CD4-positive, alpha-beta T cell (primary cell): ENCODE measurements at regions of chr9 and their contacts with region 1.

Region 1: DNA sequence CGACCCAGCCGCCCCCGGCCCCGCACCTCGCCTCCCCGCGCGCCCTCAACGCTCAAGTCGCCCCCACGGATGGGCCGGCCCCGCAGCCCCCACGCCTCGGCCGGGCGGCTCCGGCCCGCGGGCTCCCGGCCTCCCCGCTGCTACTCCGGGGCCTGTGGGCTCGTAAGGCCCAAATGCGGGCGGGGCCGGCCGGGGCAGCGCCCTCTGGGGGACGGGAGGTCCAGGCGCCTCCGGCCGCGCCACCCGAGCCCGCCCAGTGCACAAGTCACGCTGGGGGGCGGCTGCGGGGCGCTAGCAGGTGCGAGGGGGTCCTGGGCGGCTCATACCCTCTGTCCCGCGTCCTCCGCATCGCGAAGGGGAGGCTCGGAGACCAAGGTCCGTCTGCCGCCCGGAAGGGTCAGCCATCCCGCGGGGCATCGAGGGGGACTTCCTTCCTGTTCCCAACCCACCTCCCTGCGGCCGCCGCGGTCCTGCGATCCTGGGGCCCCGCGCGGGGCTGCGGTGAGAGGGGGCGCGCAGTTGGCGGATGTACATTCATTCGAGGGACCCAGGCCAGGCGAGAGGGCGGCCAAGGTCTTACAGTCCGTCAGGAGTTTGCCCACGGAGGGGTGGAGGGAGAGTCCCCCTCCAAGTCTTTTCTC is at the start of gene CIZ1:
- DNase-seq: peak; percentile 43 to 88 (median 70)
- ATAC-seq: peak; percentile 82
- H3K4me3 ChIP-seq: peak within 1 kb of the TSS; percentile 75
- H3K4me3 Mint-ChIP-seq: peak within 1 kb of the TSS; percentile 93
- H3K27ac ChIP-seq: no peak within 1 kb of the TSS
- H3K27ac Mint-ChIP-seq: peak within 1 kb of the TSS; percentile 89
- H3K4me1 ChIP-seq: peaks cover 24% of the 10 kb centered on the region
- H3K4me1 Mint-ChIP-seq: peaks cover 31% of the 10 kb centered on the region
- H3K27me3 ChIP-seq: peaks cover 0 to 4% of the 10 kb centered on the region in 2 experiments
- H3K27me3 Mint-ChIP-seq: no peaks in the 10 kb centered on the region
- CTCF ChIP-seq: peak; percentile 55
- total RNA-seq, gene CIZ1: 106 to 107 TPM

Region 2: DNA sequence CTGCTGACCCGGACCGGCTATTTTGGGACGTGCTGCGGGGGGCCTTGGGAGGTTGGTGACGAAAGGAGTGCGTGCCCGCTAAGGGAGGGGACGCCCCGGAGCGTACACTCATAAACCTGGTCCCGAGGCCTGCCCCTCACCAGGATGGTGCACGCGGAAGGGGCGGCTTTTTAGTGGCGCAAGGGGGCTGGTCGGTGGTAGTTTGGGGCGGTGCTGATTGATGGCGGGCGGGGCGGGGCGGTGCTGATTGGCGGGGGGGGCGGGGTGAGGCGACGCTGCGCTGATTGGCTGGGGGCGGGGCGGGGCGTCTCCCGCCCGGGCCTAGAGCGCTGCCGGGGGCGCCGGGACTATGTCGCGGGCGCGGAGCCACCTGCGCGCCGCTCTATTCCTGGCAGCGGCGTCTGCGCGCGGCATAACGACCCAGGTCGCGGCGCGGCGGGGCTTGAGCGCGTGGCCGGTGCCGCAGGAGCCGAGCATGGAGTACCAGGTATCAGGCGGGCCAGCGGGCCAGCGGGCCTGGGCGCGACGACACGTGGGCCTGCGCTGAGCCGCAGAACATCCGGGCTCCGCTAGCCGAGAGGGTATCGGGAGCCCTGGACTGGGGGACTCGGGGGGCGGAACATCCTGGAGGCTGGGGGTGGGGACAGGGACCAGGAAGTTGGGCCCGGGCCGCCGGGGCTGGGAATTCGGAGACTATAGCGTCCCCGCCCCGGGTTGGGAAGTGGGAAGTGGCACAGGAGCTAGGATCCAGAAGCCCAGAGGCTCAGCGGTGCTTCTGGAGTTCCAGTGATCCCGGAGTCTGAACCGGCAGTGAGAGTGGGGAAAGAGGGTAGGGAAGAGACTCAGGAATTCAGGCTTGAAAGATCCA is 388.7 kb before region 1 on chr9 and contains the start of gene FPGS:
- CTCF ChIA-PET with region 1: no interaction called
- POLR2A ChIA-PET with region 1: no interaction called
- intact Hi-C with region 1: loop called in 1 of 2 experiments (anchors 5 kb)
- DNase-seq: peak; percentile 63 to 94 (median 79)
- ATAC-seq: peak; percentile 90
- H3K4me3 ChIP-seq: peak within 1 kb of the TSS; percentile 79
- H3K4me3 Mint-ChIP-seq: peak within 1 kb of the TSS; percentile 91
- H3K27ac ChIP-seq: peak within 1 kb of the TSS; percentile 79
- H3K27ac Mint-ChIP-seq: peak within 1 kb of the TSS; percentile 80
- H3K4me1 ChIP-seq: peaks cover 29% of the 10 kb centered on the region
- H3K4me1 Mint-ChIP-seq: peaks cover 20% of the 10 kb centered on the region
- H3K27me3 ChIP-seq: no peaks in the 10 kb centered on the region
- H3K27me3 Mint-ChIP-seq: no peaks in the 10 kb centered on the region
- CTCF ChIP-seq: no peak
- total RNA-seq, gene FPGS: 58.0 to 66.6 TPM

Region 3: GRCh38 chr9:128127990-128128835 is 63.3 kb before region 1 on chr9:
- CTCF ChIA-PET with region 1: no interaction called
- POLR2A ChIA-PET with region 1: interaction called, 3 read pairs
- intact Hi-C with region 1: loop called in 1 of 2 experiments (anchors 1 kb)
- DNase-seq: peak; percentile 69 to 94 (median 84)
- ATAC-seq: peak; percentile 79
- H3K4me3 ChIP-seq: peak overlapping the region; percentile 99
- H3K4me3 Mint-ChIP-seq: peak overlapping the region; percentile 100
- H3K27ac ChIP-seq: peak overlapping the region; percentile 94 to 97
- H3K27ac Mint-ChIP-seq: peak overlapping the region; percentile 100
- H3K4me1 ChIP-seq: peaks cover 44% of the 10 kb centered on the region
- H3K4me1 Mint-ChIP-seq: peaks cover 42% of the 10 kb centered on the region
- H3K27me3 ChIP-seq: no peaks in the 10 kb centered on the region
- H3K27me3 Mint-ChIP-seq: peaks cover 3% of the 10 kb centered on the region
- CTCF ChIP-seq: no peak

Region 4: DNA sequence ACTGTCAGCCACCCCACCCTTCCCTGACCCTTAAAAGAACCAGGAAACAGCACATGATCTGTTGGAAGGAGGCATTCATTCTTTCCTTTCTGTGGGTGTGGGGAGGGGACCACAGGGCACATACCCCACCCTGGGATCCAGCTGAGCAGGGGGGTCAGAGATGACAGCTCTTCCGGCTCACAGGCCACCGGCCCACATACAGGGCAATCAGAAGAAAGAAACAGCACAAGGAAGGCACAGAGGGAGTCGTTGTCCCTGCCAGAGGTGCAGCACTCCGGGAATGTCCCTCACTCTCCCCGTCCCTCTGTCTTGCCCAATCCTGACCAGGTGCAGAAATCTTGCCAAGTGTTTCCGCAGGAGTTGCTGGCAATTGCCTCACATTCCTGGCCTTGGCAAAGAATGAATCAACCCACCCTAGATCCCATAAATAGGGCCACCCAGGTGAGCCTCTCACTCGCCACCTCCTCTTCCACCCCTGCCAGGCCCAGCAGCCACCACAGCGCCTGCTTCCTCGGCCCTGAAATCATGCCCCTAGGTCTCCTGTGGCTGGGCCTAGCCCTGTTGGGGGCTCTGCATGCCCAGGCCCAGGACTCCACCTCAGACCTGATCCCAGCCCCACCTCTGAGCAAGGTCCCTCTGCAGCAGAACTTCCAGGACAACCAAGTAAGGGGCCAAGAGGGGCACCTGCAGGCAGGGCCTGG is 42.4 kb before region 1 on chr9 and contains the start of gene LCN2:
- CTCF ChIA-PET with region 1: no interaction called
- POLR2A ChIA-PET with region 1: no interaction called
- intact Hi-C with region 1: no loop called
- DNase-seq: no peak
- ATAC-seq: no peak
- H3K4me3 ChIP-seq: no peak within 1 kb of the TSS
- H3K4me3 Mint-ChIP-seq: no peak within 1 kb of the TSS
- H3K27ac ChIP-seq: no peak within 1 kb of the TSS
- H3K27ac Mint-ChIP-seq: no peak within 1 kb of the TSS
- H3K4me1 ChIP-seq: no peaks in the 10 kb centered on the region
- H3K4me1 Mint-ChIP-seq: no peaks in the 10 kb centered on the region
- H3K27me3 ChIP-seq: no peaks in the 10 kb centered on the region
- H3K27me3 Mint-ChIP-seq: no peaks in the 10 kb centered on the region
- CTCF ChIP-seq: no peak
- total RNA-seq, gene LCN2: not detected

Region 5: DNA sequence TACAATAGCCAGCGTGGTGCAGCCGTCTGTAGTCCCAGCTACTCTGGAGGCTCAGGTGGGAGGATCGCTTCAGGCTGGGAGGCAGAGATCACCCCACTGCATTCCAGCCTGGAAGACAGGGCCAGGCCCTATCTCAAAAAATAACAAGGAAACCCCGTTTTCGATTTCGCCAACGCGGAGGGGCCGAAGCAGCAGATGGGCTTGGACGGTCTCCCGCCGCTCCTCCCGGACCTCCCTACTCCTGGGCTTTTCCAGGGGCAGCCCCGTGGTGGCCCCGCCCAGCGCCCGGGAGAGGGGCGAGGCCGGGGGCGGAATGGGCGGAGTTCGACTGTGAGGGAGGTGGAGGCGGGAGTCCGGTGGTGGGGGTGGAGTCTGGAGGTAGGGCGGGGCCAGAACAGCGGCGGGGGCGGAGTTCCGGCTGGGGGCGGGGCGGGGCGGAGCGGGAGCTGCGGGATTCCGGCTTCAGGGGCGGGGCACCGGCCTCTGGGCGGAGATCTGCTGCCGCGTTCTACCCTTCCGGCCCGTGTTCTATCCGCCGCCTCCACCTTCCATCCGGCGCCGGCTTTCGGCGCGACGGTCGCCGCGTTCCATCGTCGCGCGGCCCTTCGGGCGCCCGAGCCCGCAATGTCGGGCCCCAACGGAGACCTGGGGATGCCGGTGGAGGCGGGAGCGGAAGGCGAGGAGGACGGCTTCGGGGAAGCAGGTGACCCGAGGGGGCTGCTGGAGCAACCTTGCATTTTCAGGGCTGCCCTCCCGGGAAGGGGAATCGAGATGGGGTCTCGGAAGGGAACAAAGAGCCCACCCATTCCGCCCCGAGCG is 31.5 kb before region 1 on chr9 and contains the start of gene BBLN:
- CTCF ChIA-PET with region 1: interaction called, 8 read pairs
- POLR2A ChIA-PET with region 1: interaction called, 13 read pairs
- intact Hi-C with region 1: loop called in 1 of 2 experiments (anchors 1 kb)
- DNase-seq: peak; percentile 86 to 97 (median 92)
- ATAC-seq: peak; percentile 78
- H3K4me3 ChIP-seq: peak within 1 kb of the TSS; percentile 97
- H3K4me3 Mint-ChIP-seq: peak within 1 kb of the TSS; percentile 89
- H3K27ac ChIP-seq: peak within 1 kb of the TSS; percentile 77 to 86
- H3K27ac Mint-ChIP-seq: peak within 1 kb of the TSS; percentile 92
- H3K4me1 ChIP-seq: peaks cover 24% of the 10 kb centered on the region
- H3K4me1 Mint-ChIP-seq: peaks cover 20% of the 10 kb centered on the region
- H3K27me3 ChIP-seq: no peaks in the 10 kb centered on the region
- H3K27me3 Mint-ChIP-seq: no peaks in the 10 kb centered on the region
- CTCF ChIP-seq: no peak
- total RNA-seq, gene BBLN: 53.6 to 55.9 TPM

Region 6: GRCh38 chr9:128203024-128203706 is 11.6 kb after region 1 on chr9 and contains the start of gene DNM1:
- CTCF ChIA-PET with region 1: interaction called, 4 read pairs
- POLR2A ChIA-PET with region 1: interaction called, 3 read pairs
- intact Hi-C with region 1: loop called (anchors 1 kb)
- DNase-seq: peak; percentile 41 to 91 (median 65)
- ATAC-seq: peak; percentile 98
- H3K4me3 ChIP-seq: peak within 1 kb of the TSS; percentile 55
- H3K4me3 Mint-ChIP-seq: peak within 1 kb of the TSS; percentile 83
- H3K27ac ChIP-seq: no peak within 1 kb of the TSS
- H3K27ac Mint-ChIP-seq: no peak within 1 kb of the TSS
- H3K4me1 ChIP-seq: peaks cover 17% of the 10 kb centered on the region
- H3K4me1 Mint-ChIP-seq: peaks cover 5% of the 10 kb centered on the region
- H3K27me3 ChIP-seq: peaks cover 11 to 17% of the 10 kb centered on the region in 2 experiments
- H3K27me3 Mint-ChIP-seq: peaks cover 9% of the 10 kb centered on the region
- CTCF ChIP-seq: peak; percentile 72
- total RNA-seq, gene DNM1: 1.8 to 2.5 TPM

Region 7: DNA sequence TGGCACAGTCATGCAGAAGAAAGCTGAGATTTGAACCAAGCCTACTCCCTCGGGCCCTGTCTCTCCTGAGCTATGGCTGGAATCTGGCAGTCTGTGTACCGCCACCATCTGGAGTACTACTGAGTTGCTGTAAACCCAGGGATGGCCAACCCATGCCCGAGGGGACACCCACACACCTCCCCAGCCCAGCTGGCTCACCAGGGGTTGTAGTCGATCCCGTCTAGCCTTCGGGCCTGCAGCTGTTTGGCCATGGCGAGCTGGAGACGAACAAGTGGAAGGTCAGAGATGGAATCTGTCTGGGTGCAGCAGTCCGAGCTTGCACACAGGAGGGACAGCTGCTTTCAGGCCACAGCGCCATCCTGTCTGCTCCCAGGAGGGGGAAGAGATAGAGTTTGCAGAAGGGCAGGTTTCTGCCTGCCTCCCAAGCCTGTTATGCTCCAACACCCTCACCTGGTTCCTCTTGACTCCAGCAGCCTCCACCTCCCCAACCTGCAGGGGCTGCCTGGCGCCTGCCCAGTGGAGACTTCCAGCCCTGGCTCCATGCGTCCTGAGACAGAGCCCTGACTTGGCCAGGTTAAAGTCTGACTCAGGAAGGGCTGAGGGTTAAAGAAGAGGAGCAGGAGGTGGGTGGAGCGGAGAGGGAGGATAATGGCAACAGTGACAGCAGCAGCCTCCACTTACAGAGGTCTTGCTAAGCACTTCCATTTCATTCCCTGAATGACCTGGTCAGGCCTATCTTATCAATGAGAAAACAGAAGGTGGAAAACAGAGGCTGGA is 653.8 kb after region 1 on chr9:
- CTCF ChIA-PET with region 1: no interaction called
- POLR2A ChIA-PET with region 1: no interaction called
- intact Hi-C with region 1: no loop called
- DNase-seq: no peak
- ATAC-seq: no peak
- H3K4me3 ChIP-seq: no peak overlapping the region
- H3K4me3 Mint-ChIP-seq: no peak overlapping the region
- H3K27ac ChIP-seq: no peak overlapping the region
- H3K27ac Mint-ChIP-seq: no peak overlapping the region
- H3K4me1 ChIP-seq: no peaks in the 10 kb centered on the region
- H3K4me1 Mint-ChIP-seq: no peaks in the 10 kb centered on the region
- H3K27me3 ChIP-seq: no peaks in the 10 kb centered on the region
- H3K27me3 Mint-ChIP-seq: no peaks in the 10 kb centered on the region
- CTCF ChIP-seq: no peak